Dendritic cell treated with granulocyte-macrophage colony-stimulating factor and Interleukin-4, amounts not matched to agents 40 ng/mL and 50 ng/mL, for 4 days (primary cell): ENCODE measurements at regions of chr12 and their contacts with region 1.

Region 1: DNA sequence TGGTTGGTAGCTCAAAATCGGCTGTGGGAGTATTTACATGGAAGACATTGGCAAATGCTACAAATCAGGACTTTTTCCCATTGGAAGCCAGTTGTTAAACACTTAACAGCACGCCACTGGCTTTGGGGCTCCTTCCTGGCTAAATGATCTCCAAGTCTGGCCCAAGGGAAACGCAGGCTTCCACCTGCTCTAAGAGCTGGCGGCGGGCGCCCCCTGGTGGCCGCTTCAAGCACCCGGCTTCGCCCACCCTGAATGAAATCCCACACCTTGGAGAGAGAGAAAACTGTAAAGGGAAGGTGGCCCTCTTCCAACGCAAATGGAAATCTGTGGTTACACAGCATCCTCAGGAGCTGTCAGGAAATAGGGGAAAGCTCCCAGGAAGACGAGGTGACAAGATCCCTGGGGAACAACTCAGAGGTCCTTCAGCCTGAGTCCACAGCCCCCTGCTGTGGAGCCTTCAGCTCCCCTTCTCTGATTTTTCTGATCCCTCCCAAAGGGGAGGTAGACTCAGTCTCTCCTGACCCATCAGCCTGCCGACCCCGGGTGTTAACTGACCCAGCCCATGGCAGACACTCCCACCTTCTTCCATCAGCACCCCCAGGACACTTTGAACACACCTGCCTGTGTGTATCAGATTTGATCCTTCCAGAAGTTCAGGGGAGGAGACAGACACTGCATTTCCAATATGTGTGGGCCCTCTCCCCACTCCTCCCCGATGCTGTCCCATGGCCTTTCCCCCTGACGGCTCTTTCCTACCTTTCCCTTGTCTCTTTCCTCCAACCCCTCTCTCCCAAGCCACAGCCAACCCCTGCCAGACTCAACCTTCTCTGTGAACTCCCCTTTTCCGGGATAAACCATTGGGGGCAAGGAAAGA is 15.4 kb downstream of the SELPLG start:
- H3K4me3 Mint-ChIP-seq: no peak overlapping the region
- H3K27ac Mint-ChIP-seq: peak overlapping the region; percentile 53
- H3K4me1 Mint-ChIP-seq: peaks cover 83% of the 10 kb centered on the region
- H3K27me3 Mint-ChIP-seq: no peaks in the 10 kb centered on the region

Region 2: DNA sequence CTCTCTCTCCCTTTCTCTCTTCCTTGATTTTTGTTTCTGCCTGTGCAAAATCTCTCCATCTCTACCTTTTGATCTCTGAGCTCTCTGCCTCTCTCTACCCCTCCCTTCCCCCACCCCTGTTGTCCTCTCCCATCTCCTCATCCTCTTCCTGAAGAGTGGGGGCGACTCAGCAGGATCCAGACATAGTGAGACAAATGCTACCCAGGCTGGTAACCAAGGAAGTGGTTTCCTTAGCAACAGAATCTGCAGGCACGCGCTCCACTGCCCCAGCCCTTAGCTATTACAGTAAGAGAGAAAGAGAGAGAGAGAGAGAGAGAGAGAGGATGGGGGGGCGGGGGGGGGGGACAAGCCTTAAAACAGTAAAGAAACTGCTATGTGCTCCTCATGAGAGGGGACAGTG is 364.8 kb before region 1 on chr12:
- intact Hi-C with region 1: no loop called
- H3K4me3 Mint-ChIP-seq: no peak overlapping the region
- H3K27ac Mint-ChIP-seq: no peak overlapping the region
- H3K4me1 Mint-ChIP-seq: peaks cover 12% of the 10 kb centered on the region
- H3K27me3 Mint-ChIP-seq: peaks cover 49% of the 10 kb centered on the region

Region 3: GRCh38 chr12:108562348-108563135 is 55.8 kb before region 1 on chr12 and contains the start of gene ISCU:
- intact Hi-C with region 1: loop called (anchors 1 kb)
- H3K4me3 Mint-ChIP-seq: peak within 1 kb of the TSS; percentile 100
- H3K27ac Mint-ChIP-seq: peak within 1 kb of the TSS; percentile 94
- H3K4me1 Mint-ChIP-seq: peaks cover 59% of the 10 kb centered on the region
- H3K27me3 Mint-ChIP-seq: no peaks in the 10 kb centered on the region